IMR-90 (cell line): ENCODE measurements at regions of chr12 and their contacts with region 1.

Region 1: GRCh38 chr12:15856097-15856982 is 25.8 kb upstream of the STRAP start:
- DNase-seq: peak; percentile 76
- ATAC-seq: peak; percentile 66
- H3K4me3 ChIP-seq: no peak overlapping the region
- H3K27ac ChIP-seq: peak overlapping the region; percentile 63
- H3K4me1 ChIP-seq: peaks cover 11% of the 10 kb centered on the region
- H3K27me3 ChIP-seq: no peaks in the 10 kb centered on the region
- CTCF ChIP-seq: peak; percentile 93
- POLR2A ChIP-seq: peak; percentile 63; the same call in 1 of the 2 replicates
- RAD21 ChIP-seq: peak; percentile 99

Region 2: GRCh38 chr12:15532364-15532977 is 323.9 kb before region 1 on chr12:
- CTCF ChIA-PET with region 1: interaction called, 6 read pairs
- POLR2A ChIA-PET with region 1: no interaction called
- dilution Hi-C with region 1: no loop called
- in situ Hi-C with region 1: loop called (anchors 10 kb)
- intact Hi-C with region 1: loop called (anchors 1 kb)
- DNase-seq: peak; percentile 77
- ATAC-seq: peak; percentile 86
- H3K4me3 ChIP-seq: no peak overlapping the region
- H3K27ac ChIP-seq: no peak overlapping the region
- H3K4me1 ChIP-seq: peaks cover 5% of the 10 kb centered on the region; the same call in 1 of the 2 replicates
- H3K27me3 ChIP-seq: no peaks in the 10 kb centered on the region
- CTCF ChIP-seq: peak; percentile 80
- POLR2A ChIP-seq: no peak
- RAD21 ChIP-seq: peak; percentile 84

Region 3: GRCh38 chr12:15599266-15600037 is 256.9 kb before region 1 on chr12:
- CTCF ChIA-PET with region 1: interaction called, 4 read pairs
- POLR2A ChIA-PET with region 1: no interaction called
- dilution Hi-C with region 1: no loop called
- in situ Hi-C with region 1: loop called (anchors 5 kb)
- intact Hi-C with region 1: no loop called
- DNase-seq: peak; percentile 81
- ATAC-seq: peak; percentile 56
- H3K4me3 ChIP-seq: no peak overlapping the region
- H3K27ac ChIP-seq: no peak overlapping the region
- H3K4me1 ChIP-seq: peaks cover 8% of the 10 kb centered on the region
- H3K27me3 ChIP-seq: no peaks in the 10 kb centered on the region
- CTCF ChIP-seq: no peak
- POLR2A ChIP-seq: no peak
- RAD21 ChIP-seq: no peak

Region 4: GRCh38 chr12:15772405-15773018 is 83.8 kb before region 1 on chr12:
- CTCF ChIA-PET with region 1: interaction called, 3 read pairs
- POLR2A ChIA-PET with region 1: no interaction called
- dilution Hi-C with region 1: no loop called
- in situ Hi-C with region 1: no loop called
- intact Hi-C with region 1: loop called (anchors 5 kb)
- DNase-seq: peak; percentile 29
- ATAC-seq: no peak
- H3K4me3 ChIP-seq: no peak overlapping the region
- H3K27ac ChIP-seq: no peak overlapping the region
- H3K4me1 ChIP-seq: peaks cover 5% of the 10 kb centered on the region
- H3K27me3 ChIP-seq: no peaks in the 10 kb centered on the region
- CTCF ChIP-seq: peak; percentile 47
- POLR2A ChIP-seq: no peak
- RAD21 ChIP-seq: peak; percentile 38

Region 5: GRCh38 chr12:16150291-16150690 is 294.0 kb after region 1 on chr12:
- CTCF ChIA-PET with region 1: no interaction called
- POLR2A ChIA-PET with region 1: no interaction called
- dilution Hi-C with region 1: no loop called
- in situ Hi-C with region 1: no loop called
- intact Hi-C with region 1: no loop called
- DNase-seq: no peak
- ATAC-seq: no peak
- H3K4me3 ChIP-seq: no peak overlapping the region
- H3K27ac ChIP-seq: no peak overlapping the region
- H3K4me1 ChIP-seq: no peaks in the 10 kb centered on the region
- H3K27me3 ChIP-seq: no peaks in the 10 kb centered on the region; the same call in 1 of the 2 replicates
- CTCF ChIP-seq: no peak
- POLR2A ChIP-seq: no peak
- RAD21 ChIP-seq: no peak